Activated B cell treated with CpG ODN at 0.5 μM for 24 hours (primary cell): ENCODE measurements at regions of chr13 and their contacts with region 1.

Region 1: DNA sequence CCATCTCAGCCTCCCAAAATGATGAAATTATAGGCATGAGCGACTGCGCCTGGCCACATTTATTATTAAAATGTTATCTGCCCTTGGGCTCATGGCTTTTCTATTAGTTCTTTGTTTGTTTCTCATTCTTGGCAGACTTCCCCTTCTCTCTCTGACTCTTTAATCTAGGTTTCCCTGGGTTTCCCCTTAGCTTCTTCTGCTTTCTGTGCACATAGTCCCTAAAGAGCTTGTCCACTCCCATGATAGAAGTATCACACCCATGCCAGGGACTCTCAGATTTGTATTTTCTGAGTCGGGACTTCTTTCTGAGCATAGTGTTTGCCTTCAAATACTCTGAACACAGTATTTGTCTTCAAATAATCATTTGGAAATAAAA is 38.6 kb upstream of the ITM2B start:
- DNase-seq: no peak
- ATAC-seq: peak; percentile 98
- H3K4me3 Mint-ChIP-seq: peak overlapping the region; percentile 60
- H3K27ac Mint-ChIP-seq: peak overlapping the region; percentile 82
- H3K4me1 Mint-ChIP-seq: peaks cover 26% of the 10 kb centered on the region
- H3K27me3 Mint-ChIP-seq: peaks cover 4% of the 10 kb centered on the region
- CTCF ChIP-seq: no peak

Region 2: DNA sequence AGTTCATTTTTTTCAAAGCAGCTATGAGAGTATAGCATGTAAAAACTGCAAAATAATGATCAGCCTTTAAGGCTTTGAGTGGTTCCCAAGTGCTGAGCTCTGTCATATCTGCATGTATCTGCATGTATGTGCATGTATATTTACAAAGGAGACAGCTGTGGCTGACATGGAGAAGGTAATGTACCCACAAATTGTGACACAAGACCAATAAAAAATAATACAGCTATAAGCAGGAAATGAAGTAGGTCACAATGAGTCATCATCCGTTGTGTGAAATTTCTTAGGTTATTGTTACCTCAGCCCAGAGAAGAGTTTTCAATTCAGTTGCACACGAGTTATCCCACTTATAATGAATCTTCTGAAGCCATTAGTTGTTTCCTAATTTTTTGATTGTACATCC is 38.5 kb before region 1 on chr13:
- CTCF ChIA-PET with region 1: no interaction called
- POLR2A ChIA-PET with region 1: no interaction called
- intact Hi-C with region 1: loop called (anchors 2 kb)
- DNase-seq: no peak
- ATAC-seq: peak; percentile 56
- H3K4me3 Mint-ChIP-seq: peak overlapping the region; percentile 32
- H3K27ac Mint-ChIP-seq: no peak overlapping the region
- H3K4me1 Mint-ChIP-seq: peaks cover 46% of the 10 kb centered on the region
- H3K27me3 Mint-ChIP-seq: no peaks in the 10 kb centered on the region
- CTCF ChIP-seq: no peak

Region 3: DNA sequence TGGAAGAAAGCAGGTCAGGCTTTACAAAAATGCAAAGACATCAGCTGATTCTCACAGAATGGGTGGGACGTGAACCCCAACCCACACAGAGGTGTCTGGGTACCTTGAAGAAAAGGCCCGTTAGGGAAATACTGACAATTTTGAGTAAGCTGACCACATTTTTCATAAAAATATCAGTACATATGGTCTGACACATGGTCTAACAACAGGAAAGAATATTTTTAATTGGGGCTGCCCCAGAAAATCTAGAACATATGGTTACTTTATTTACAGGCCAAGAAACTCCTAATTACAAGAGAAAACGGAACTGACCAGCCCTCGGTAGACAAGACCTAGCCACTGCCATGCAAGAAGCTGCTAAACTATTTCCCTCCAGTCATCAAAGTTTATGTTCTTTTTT is 10.1 kb before region 1 on chr13:
- CTCF ChIA-PET with region 1: interaction called, 4 read pairs
- POLR2A ChIA-PET with region 1: interaction called, 11 read pairs
- intact Hi-C with region 1: loop called (anchors 1 kb)
- DNase-seq: no peak
- ATAC-seq: no peak
- H3K4me3 Mint-ChIP-seq: peak overlapping the region; percentile 21
- H3K27ac Mint-ChIP-seq: peak overlapping the region; percentile 61
- H3K4me1 Mint-ChIP-seq: peaks cover 66% of the 10 kb centered on the region
- H3K27me3 Mint-ChIP-seq: no peaks in the 10 kb centered on the region
- CTCF ChIP-seq: no peak

Region 4: DNA sequence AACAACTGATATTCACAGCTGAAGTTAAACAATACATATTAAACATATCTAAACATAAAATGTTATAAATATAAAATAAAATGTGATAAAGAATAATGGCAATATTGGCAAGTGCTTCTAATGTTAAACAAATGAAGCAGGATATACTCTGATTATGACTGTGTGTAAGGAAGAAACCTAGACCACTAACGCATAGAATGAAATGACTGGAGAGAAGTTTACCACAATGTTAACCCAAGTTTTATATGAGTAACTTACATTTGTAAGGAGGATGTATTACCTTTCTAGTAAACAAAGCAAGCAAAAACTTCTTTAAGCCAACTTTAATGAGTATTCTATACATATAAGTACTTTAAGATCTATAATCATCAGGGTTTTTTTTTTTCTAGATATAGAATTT is 152.2 kb after region 1 on chr13:
- CTCF ChIA-PET with region 1: no interaction called
- POLR2A ChIA-PET with region 1: no interaction called
- intact Hi-C with region 1: no loop called
- DNase-seq: no peak
- ATAC-seq: no peak
- H3K4me3 Mint-ChIP-seq: no peak overlapping the region
- H3K27ac Mint-ChIP-seq: no peak overlapping the region
- H3K4me1 Mint-ChIP-seq: no peaks in the 10 kb centered on the region
- H3K27me3 Mint-ChIP-seq: no peaks in the 10 kb centered on the region
- CTCF ChIP-seq: no peak